Colonic mucosa (tissue), 4 donors: ENCODE measurements at regions of chr15 and their contacts with region 1.

Region 1: GRCh38 chr15:94582369-94582768 is 351.0 kb downstream of the MCTP2 start:
- DNase-seq: peak; percentile 20
- H3K4me3 ChIP-seq: no peak overlapping the region
- H3K27ac ChIP-seq: no peak overlapping the region
- H3K4me1 ChIP-seq: no peaks in the 10 kb centered on the region
- H3K27me3 ChIP-seq: no peaks in the 10 kb centered on the region
- CTCF ChIP-seq: no peak

Region 2: GRCh38 chr15:94412979-94413746 is 169.2 kb before region 1 on chr15:
- intact Hi-C with region 1: loop called (anchors 10 kb)
- DNase-seq: peak; percentile 47
- H3K4me3 ChIP-seq: no peak overlapping the region
- H3K27ac ChIP-seq: no peak overlapping the region
- H3K4me1 ChIP-seq: no peaks in the 10 kb centered on the region
- H3K27me3 ChIP-seq: no peaks in the 10 kb centered on the region
- CTCF ChIP-seq: peak; percentile 34

Region 3: DNA sequence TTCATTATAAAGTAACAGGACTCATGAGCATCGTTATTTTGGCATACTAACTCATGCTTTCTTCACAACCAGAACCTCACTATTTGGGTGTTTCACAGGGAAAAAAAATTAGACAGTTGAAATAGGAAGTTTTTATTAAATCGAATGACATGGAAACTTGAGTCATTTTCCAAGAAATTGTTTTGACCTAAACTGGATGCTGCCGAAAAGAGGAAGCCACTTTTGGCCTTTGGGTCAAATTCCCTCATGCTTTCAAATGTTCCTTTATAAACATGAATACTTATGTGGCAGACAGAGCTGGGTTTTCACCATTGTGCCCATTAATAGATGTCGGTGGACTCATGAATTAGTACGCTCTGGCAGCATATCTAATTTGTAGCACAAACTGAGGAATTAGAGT is 126.1 kb before region 1 on chr15:
- intact Hi-C with region 1: no loop called
- DNase-seq: no peak
- H3K4me3 ChIP-seq: no peak overlapping the region
- H3K27ac ChIP-seq: no peak overlapping the region
- H3K4me1 ChIP-seq: no peaks in the 10 kb centered on the region
- H3K27me3 ChIP-seq: no peaks in the 10 kb centered on the region
- CTCF ChIP-seq: no peak